ENCODE measurements at regions of chr17 and their contacts with region 1.

Region 1: GRCh38 chr17:16537130-16537458 is 31.9 kb downstream of the ZNF287 start:
- DNase-seq: no peak
- H3K4me3 Mint-ChIP-seq: peak overlapping the region; percentile 90
- H3K27ac Mint-ChIP-seq: peak overlapping the region; percentile 88
- H3K4me1 Mint-ChIP-seq: no peaks in the 10 kb centered on the region
- H3K27me3 Mint-ChIP-seq: no peaks in the 10 kb centered on the region
- CTCF ChIP-seq: no peak

Region 2: DNA sequence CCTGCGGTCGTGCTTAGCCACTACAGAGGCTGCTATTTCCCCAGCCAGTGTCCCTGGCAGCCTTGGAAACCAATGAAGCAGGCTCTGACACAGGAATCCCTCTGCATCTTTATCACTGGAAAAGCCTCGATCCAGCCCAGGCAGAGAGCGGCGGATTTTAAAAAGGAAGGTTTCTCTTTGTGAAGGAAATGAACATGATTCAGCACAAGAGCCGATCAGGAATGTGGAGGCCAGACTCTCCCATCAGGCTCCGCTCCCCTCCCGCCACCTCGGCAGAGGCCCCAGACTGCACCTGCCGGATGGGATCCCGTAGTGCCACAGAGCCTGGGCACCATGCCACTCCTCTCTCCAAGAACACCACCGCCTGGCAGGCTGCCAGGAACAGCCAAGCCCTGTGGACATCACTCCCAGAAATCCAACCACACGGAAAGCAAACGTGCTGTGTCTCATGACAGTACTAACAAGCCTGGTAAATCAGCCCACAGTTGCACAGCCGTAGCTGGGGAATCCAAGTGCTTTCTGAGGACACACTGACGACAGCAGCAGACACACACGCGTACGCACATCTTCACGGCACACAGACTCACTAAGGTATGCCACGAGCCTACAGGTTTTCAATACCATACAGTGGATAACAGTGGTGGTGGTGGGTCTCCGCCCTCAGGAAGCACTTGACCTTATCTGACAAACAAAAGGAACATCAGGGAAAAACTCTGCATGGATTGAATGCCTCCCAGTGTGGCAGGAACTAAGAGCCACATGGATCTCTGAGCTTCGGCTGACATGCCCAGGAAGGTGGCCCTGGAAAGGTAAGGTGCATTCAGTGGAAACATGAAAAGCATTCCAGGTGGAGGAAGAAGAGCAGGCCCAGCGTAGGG is 50.5 kb before region 1 on chr17:
- CTCF ChIA-PET with region 1: no interaction called
- intact Hi-C with region 1: no loop called
- DNase-seq: peak; percentile 78
- H3K4me3 Mint-ChIP-seq: peak overlapping the region; percentile 60
- H3K27ac Mint-ChIP-seq: no peak overlapping the region
- H3K4me1 Mint-ChIP-seq: peaks cover 20% of the 10 kb centered on the region
- H3K27me3 Mint-ChIP-seq: no peaks in the 10 kb centered on the region
- CTCF ChIP-seq: no peak

Region 3: GRCh38 chr17:16662936-16663335 is 125.8 kb after region 1 on chr17:
- CTCF ChIA-PET with region 1: no interaction called
- intact Hi-C with region 1: no loop called
- DNase-seq: no peak
- H3K4me3 Mint-ChIP-seq: no peak overlapping the region
- H3K27ac Mint-ChIP-seq: no peak overlapping the region
- H3K4me1 Mint-ChIP-seq: no peaks in the 10 kb centered on the region
- H3K27me3 Mint-ChIP-seq: no peaks in the 10 kb centered on the region
- CTCF ChIP-seq: no peak

Region 4: DNA sequence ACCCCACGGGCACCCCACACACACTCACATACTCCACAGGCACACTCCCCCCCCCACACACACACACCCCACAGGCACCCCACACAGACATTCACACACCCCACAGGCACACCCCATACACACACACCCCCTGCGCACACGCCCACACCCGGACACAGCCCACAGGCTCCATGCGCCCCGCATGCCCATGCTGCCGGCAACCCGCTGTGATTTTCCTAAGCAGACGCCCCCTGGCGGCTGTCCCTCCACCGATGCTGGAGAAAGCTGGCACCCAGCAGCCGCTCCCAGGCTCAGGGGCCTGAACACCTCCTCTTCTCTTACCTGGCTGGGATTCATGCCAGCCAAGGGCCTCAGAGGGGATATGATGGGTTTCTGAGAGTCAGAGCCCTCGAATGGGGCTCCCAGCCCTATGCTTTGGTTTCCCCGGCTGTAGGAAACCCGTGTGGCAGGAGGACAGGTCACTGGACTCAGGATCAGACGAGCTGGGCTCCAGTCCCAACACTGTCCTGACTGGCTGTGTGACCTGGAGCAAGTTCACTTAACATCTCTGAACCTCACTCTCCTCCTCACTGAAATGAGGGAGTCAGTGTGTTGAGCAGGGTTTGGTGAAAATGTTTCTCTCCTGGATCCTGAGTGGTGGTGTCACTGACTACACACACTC is 454.4 kb after region 1 on chr17:
- CTCF ChIA-PET with region 1: no interaction called
- intact Hi-C with region 1: loop called (anchors 2 kb)
- DNase-seq: peak; percentile 84
- H3K4me3 Mint-ChIP-seq: no peak overlapping the region
- H3K27ac Mint-ChIP-seq: no peak overlapping the region
- H3K4me1 Mint-ChIP-seq: peaks cover 9% of the 10 kb centered on the region
- H3K27me3 Mint-ChIP-seq: no peaks in the 10 kb centered on the region
- CTCF ChIP-seq: peak; percentile 63